Lower lobe of right lung (tissue), 2 donors: ENCODE measurements at regions of chr2 and their contacts with region 1.

Region 1: GRCh38 chr2:47862949-47863348 is 43.3 kb downstream of the FBXO11 start:
- DNase-seq: no peak
- ATAC-seq: no peak
- H3K4me3 ChIP-seq: no peak overlapping the region
- H3K27ac ChIP-seq: no peak overlapping the region
- H3K4me1 ChIP-seq: peaks cover 47% of the 10 kb centered on the region
- H3K27me3 ChIP-seq: no peaks in the 10 kb centered on the region
- CTCF ChIP-seq: no peak

Region 2: GRCh38 chr2:48104418-48104817 is 241.5 kb after region 1 on chr2:
- intact Hi-C with region 1: loop called (anchors 5 kb)
- DNase-seq: no peak
- ATAC-seq: no peak
- H3K4me3 ChIP-seq: no peak overlapping the region
- H3K27ac ChIP-seq: no peak overlapping the region
- H3K4me1 ChIP-seq: peaks cover 18% of the 10 kb centered on the region
- H3K27me3 ChIP-seq: no peaks in the 10 kb centered on the region
- CTCF ChIP-seq: no peak